ENCODE measurements at regions of chr4 and their contacts with region 1.

Region 1: DNA sequence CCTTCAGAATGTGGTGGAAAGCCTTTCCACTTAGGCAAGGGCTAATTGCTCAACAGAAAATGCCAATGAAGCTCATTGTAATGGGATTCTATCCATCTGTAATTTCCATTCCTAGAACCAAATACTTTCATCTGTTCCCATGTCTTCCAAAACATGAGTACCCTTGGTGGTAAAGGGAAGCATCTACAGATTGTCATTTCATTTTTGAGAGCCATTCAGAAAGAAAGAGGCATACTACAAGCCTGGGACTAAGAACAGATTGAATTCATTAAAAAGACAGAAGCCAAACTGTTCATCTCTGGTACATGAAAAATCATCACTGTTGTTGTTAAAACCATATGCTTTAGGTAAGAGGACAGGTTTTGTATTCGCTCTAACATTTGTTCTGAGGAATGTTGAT is 43.6 kb upstream of the DCTD start:
- DNase-seq: no peak
- ATAC-seq: no peak
- H3K4me3 ChIP-seq: no peak overlapping the region
- H3K27ac ChIP-seq: no peak overlapping the region
- H3K4me1 ChIP-seq: no peaks in the 10 kb centered on the region
- H3K27me3 ChIP-seq: no peaks in the 10 kb centered on the region
- CTCF ChIP-seq: no peak

Region 2: DNA sequence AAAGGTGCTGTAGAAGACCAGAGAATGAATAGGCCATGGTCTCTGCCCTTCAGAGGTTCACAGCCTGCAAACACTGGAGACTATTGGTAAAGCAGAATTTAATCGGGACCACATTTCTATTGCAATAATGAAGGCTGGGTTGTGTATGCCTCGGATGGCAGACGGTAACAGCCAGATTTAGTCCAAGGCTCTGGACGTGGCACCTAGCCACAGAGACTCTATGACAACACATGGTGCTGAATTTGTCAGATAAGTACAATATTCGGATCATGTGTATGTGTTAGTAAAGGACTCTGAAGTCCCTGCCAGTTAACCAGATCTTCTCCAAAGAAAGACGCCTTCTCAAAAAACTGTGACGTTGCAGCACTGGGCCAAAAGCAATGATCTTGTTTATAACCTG is 172.5 kb before region 1 on chr4:
- CTCF ChIA-PET with region 1: no interaction called
- POLR2A ChIA-PET with region 1: interaction called, 13 read pairs
- intact Hi-C with region 1: no loop called
- DNase-seq: no peak
- ATAC-seq: no peak
- H3K4me3 ChIP-seq: no peak overlapping the region
- H3K27ac ChIP-seq: no peak overlapping the region
- H3K4me1 ChIP-seq: no peaks in the 10 kb centered on the region
- H3K27me3 ChIP-seq: no peaks in the 10 kb centered on the region
- CTCF ChIP-seq: no peak